ENCODE measurements at regions of chr19 and their contacts with region 1.

Region 1: DNA sequence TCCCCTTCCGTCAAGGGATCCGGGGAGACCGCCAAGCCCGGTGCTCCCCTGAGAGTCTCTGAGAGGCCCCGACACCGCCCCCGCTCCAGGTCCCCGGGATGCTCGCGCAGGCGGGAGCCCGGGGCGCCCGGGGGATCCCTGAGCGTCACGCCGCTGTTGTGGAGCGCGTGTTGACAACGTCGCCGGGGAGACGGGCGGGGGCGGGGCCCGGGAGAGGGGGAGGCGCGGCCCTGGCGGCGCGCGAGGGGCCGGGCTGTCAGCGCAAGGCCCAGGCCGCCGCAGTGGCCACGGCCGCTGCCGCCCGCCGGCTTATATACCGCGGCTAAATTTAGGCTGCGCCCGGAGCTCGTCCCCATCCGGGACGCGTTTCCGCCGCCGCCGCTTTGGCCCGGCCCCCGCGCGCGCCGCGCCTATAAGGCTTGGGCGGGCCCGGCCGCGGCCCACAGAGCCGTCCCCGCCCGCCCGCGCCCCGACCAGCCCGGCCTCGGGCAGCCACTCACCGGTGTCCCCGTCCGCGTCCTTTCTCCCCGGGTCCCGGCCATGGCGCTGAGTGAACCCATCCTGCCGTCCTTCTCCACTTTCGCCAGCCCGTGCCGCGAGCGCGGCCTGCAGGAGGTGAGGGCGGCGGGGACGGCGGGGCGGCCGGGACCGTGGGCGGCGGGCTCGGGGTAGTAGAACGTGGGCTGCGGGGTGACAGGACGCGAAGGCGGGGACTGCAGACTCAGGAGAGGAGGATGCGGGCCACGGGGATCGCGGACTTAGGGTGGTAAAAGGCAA is at the start of gene KLF2:
- DNase-seq: peak; percentile 92
- ATAC-seq: peak; percentile 63
- H3K4me3 Mint-ChIP-seq: peak within 1 kb of the TSS; percentile 77
- H3K27ac Mint-ChIP-seq: peak within 1 kb of the TSS; percentile 81
- H3K4me1 Mint-ChIP-seq: peaks cover 77% of the 10 kb centered on the region
- H3K27me3 Mint-ChIP-seq: no peaks in the 10 kb centered on the region
- CTCF ChIP-seq: no peak
- total RNA-seq, gene KLF2: 76.8 and 87.6 TPM in 2 replicates

Region 2: DNA sequence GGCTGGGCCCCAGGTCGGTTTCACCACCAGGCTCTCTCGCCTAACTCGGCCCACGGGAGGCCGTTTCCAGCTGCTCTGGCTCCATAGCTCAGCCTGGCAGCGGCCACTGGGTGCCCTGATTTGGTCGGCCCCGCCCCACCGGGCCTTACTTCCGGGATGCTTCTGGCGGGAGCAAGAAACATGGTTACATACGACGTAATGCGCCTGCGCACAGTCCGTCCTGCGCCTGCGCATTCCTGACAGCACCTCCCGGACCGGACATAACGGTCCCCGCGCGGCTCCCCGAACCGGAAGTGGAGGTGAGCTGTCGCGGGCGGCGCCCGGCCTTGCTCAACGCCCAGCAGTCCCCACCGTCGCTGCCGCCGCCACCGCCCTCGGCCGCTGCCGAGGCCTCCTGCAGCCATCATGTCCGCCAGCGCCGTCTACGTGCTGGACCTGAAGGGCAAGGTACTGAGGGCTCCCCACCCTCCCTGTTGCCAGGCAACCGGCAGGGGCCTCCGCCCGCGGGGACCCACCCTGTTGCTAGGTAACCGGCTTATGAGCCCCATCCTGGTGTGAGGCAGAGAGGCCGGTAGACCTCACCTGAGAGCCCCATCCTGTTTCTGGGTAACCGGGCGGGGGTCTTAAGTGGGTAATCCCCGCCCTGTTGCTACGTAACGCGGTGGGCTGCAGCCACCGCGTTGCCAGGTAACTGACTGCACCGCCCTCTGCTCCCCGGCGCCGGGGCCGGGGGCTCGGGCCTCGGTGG is 126.8 kb before region 1 on chr19 and contains the start of gene AP1M1:
- CTCF ChIA-PET with region 1: no interaction called
- POLR2A ChIA-PET with region 1: interaction called, 4 read pairs
- intact Hi-C with region 1: loop called (anchors 5 kb)
- DNase-seq: peak; percentile 99
- ATAC-seq: peak; percentile 88
- H3K4me3 Mint-ChIP-seq: peak within 1 kb of the TSS; percentile 83
- H3K27ac Mint-ChIP-seq: peak within 1 kb of the TSS; percentile 97
- H3K4me1 Mint-ChIP-seq: peaks cover 39% of the 10 kb centered on the region
- H3K27me3 Mint-ChIP-seq: no peaks in the 10 kb centered on the region
- CTCF ChIP-seq: no peak
- total RNA-seq, gene AP1M1: 82.6 and 87.5 TPM in 2 replicates

Region 3: DNA sequence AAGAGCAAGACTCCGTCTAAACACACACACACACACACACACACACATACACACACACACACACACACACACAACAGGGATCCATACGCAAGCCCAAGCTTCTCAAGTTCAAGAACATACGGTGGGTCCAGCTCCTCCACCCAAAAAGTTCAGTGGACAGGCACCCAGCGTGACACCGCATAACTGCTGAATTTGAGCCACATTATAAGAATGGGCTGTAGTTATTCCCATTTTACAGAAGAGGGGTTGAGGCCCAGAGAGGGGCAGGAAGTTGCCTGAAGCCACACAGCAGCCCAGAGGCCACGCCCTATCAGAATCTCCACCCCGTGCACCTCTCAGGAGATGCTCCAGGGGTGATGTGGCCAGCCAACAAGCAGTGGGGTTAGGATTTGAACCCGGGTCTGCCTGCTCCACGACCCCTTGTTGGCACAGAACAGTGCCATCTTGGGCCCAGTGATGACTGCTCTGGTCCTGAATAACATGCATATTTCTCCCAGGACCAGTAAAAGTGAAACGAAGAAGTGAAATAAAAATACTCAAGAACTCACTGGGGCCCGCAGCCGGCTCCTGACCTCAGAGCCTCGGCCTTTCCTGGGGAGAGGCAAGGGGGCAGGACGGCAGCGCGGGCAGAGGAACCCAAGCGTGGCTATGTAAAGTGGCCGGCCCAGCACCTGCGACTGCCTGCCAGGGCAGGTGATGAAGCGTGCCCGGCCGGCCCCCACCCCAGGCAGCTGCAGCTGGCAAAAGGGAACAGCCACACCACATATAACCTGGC is 65.0 kb before region 1 on chr19:
- CTCF ChIA-PET with region 1: interaction called, 7 read pairs
- POLR2A ChIA-PET with region 1: interaction called, 445 read pairs
- intact Hi-C with region 1: loop called (anchors 1 kb)
- DNase-seq: peak; percentile 78
- ATAC-seq: peak; percentile 75
- H3K4me3 Mint-ChIP-seq: peak overlapping the region; percentile 65
- H3K27ac Mint-ChIP-seq: peak overlapping the region; percentile 93
- H3K4me1 Mint-ChIP-seq: peaks cover 90% of the 10 kb centered on the region
- H3K27me3 Mint-ChIP-seq: no peaks in the 10 kb centered on the region
- CTCF ChIP-seq: no peak

Region 4: DNA sequence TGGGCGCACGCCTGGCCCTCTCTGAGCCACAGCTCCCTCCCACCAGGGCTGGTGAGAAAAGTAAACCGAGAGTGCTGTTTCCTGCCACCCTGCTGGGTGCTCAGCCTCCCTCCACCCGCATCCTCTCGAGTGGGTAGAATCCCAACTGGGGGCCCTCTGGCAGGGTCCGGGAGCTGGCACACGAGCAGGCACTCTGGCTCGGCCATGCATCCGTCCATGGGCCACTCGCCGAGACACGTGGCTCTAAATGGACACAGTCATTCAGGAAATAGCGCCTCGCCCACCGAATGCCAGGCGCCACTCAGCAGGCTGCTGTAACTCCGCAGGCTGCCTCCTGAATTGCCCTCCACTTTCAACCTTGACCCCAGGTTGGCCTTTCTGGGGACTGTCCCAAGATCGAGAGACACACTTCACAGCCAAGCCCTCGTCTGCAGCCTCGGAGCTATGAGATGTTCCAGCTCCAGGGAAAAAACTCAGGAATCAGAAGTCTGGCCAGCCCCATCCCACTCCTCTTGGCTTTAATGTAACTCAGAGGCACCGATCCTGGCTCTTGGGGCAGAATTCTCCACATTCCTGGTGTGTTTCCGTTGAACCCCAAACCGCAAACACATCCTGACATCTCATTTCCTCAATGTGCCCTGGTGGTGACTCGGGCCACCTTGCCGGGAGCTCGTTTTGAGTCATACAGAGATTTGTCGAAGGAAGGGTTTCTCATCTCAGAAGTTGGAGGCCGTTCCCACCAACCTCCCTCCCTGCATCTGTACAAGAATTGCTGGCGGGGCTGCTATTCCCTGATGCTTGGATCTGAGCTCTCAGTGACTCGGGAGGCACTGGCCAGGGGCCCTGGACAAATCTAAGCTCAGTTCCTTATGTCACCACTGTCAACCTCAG is 14.1 kb after region 1 on chr19:
- CTCF ChIA-PET with region 1: interaction called, 14 read pairs
- POLR2A ChIA-PET with region 1: interaction called, 428 read pairs
- intact Hi-C with region 1: loop called (anchors 1 kb)
- DNase-seq: no peak
- ATAC-seq: peak; percentile 19
- H3K4me3 Mint-ChIP-seq: peak overlapping the region; percentile 76
- H3K27ac Mint-ChIP-seq: peak overlapping the region; percentile 75
- H3K4me1 Mint-ChIP-seq: peaks cover 64% of the 10 kb centered on the region
- H3K27me3 Mint-ChIP-seq: no peaks in the 10 kb centered on the region
- CTCF ChIP-seq: no peak

Region 5: GRCh38 chr19:16397791-16398471 is 73.4 kb after region 1 on chr19:
- CTCF ChIA-PET with region 1: no interaction called
- POLR2A ChIA-PET with region 1: interaction called, 23 read pairs
- intact Hi-C with region 1: no loop called
- DNase-seq: no peak
- ATAC-seq: no peak
- H3K4me3 Mint-ChIP-seq: peak overlapping the region; percentile 59
- H3K27ac Mint-ChIP-seq: peak overlapping the region; percentile 91
- H3K4me1 Mint-ChIP-seq: peaks cover 77% of the 10 kb centered on the region
- H3K27me3 Mint-ChIP-seq: no peaks in the 10 kb centered on the region
- CTCF ChIP-seq: no peak